ENCODE measurements at regions of chr17 and their contacts with region 1.

Region 1: DNA sequence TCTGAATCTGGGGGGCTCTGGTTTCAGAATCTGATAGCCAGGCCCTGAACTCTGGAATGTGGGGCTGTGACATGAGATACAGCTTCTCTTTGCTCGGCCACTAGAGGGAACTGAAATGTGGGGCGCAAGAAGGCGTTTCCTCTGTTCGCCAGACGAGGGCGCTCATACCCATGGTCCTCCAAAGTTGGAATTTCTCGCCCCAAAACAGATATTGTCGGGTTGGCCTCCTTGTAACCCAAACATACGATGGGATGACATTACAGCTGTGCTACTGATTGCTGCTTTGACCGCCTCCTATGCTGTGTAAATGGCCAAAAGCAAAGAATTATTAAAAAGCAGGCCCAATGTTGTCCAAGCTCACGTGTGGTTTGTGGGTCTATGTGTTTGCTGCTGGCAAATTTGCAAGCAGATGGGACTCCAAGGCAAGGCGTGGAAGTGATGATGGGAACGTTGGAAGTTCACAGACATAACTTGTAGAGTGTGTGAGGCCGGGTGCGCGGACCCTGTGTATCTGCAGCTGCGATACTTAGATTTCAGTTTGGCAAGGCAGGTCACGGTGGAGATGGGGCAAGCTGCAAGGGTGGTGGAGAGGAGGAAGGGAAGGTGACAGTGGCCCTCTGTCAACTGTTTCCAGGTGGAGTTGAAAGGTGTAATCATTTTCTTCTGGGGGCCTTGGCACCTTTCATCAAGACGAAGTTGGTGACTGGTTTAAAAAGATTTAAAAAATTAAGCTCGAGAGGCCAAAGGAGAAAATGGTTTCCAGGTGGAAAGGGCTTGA is 13.0 kb upstream of the MSI2 start:
- DNase-seq: peak; percentile 62 to 79 (median 75)
- ATAC-seq: peak; percentile 98
- H3K4me3 ChIP-seq: no peak overlapping the region
- H3K4me1 ChIP-seq: no peaks in the 10 kb centered on the region
- CTCF ChIP-seq: peak; percentile 97

Region 2: DNA sequence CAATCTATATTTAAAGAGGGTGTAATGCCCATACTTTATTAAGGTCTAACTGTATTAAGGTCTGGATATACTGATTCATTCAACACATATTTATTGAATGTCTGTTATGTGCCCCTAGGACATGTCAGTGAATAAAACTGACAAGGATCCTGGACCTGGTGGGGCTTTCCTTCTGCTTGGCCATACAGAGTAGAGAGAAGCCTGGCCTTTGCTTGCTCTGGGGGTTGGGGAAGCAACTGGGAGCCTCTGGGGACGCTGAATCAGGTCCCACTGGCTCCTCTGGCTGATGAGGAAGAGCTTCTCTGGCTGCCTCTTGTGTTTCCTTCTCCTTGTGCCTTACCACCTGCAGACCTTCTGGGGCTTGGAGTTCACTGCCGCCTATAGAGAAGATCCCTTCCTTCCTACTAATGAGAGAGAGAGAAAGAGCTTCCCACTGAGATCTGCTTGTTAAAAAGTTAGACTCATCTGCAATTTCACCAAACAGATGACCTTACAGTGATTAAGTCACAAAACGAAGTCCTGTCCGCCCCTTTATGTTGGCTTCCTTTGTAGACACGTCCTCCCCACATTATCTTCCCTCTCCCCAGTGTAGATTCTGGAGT is 62.6 kb after region 1 on chr17:
- intact Hi-C with region 1: no loop called
- DNase-seq: no peak
- ATAC-seq: no peak
- H3K4me3 ChIP-seq: no peak overlapping the region
- H3K4me1 ChIP-seq: no peaks in the 10 kb centered on the region
- CTCF ChIP-seq: no peak

Region 3: GRCh38 chr17:57350277-57350676 is 106.9 kb after region 1 on chr17:
- intact Hi-C with region 1: no loop called
- DNase-seq: peak in 1 of 3 donors; percentile 16
- ATAC-seq: peak; percentile 21
- H3K4me3 ChIP-seq: no peak overlapping the region
- H3K4me1 ChIP-seq: no peaks in the 10 kb centered on the region
- CTCF ChIP-seq: no peak

Region 4: DNA sequence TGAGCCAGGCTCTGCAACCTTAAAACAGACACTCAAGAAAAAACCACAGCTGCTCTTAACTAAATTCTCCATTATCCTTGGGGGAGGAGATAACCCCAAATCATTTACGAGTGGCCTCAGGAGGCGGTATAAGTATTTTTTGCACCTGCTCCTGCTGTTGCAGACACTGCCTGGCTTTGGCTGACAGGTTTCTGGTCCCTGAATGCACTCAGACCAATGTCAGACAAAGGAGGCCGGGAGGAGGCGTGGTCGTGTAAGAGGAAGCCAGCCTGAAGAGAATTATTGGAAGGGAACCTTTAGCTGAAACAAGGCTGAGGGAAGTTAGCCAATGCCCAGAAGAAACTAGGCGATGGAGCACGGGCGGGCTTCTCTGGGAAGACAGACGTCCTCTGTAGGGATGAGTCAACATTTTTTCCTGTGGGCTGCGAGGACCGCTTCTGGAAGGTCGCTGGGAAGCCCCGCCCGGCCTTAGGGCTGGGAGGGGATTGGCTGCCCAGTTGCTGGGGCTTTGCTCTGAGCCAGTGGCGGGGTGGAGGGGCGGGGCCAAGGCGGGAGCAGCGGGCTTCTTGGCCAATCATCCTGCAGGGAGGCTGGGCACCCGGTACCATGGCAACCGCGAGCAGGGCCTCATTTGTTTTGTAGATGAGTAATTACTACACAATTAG is 419.4 kb after region 1 on chr17:
- intact Hi-C with region 1: loop called in 1 of 2 experiments (anchors 10 kb)
- DNase-seq: peak; percentile 84 to 93 (median 87)
- ATAC-seq: peak; percentile 96
- H3K4me3 ChIP-seq: no peak overlapping the region
- H3K4me1 ChIP-seq: no peaks in the 10 kb centered on the region
- CTCF ChIP-seq: no peak

Region 5: GRCh38 chr17:57671667-57672632 is 428.6 kb after region 1 on chr17:
- intact Hi-C with region 1: loop called (anchors 10 kb)
- DNase-seq: peak; percentile 70 to 72 (median 71)
- ATAC-seq: peak; percentile 85
- H3K4me3 ChIP-seq: no peak overlapping the region
- H3K4me1 ChIP-seq: no peaks in the 10 kb centered on the region
- CTCF ChIP-seq: peak; percentile 80

Region 6: DNA sequence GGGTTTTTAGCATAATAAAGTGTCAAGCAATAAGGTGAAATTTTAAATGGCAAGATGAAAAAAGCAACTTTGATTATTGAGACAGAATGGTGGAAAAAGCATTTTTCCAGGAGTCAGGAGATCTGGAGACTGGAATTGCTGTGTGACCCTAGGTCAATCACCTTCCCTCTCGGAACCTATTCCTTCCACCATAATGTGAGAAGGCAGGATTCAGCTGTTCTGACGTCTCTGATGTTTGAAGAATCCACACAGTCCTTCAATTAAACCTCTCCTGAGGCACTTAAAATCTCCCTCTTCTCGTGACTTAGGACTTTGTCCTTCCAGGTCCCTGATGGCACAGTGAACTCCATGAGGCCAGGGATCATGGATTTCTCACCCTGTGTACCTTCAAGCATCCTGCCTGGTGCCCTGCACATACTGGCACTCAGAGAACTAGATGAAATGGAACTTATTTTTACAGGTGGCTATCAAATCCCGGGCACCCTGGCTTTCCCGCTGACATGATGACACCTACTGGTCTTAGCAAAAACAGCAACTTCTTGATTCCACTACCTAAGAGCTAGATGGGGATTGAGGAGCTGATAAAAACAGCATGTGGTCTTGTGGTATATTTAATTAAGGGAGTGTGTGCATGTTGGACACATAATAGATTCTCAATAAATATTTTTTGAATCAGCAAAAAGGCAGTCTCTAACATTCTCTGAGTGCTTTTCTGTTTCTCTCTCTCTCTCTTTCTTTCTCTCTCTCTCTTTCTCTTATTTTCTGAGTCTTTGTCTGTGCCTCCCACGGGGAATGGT is 504.1 kb after region 1 on chr17:
- intact Hi-C with region 1: loop called in 1 of 2 experiments (anchors 10 kb)
- DNase-seq: peak in 1 of 3 donors; percentile 53
- ATAC-seq: peak; percentile 67
- H3K4me3 ChIP-seq: no peak overlapping the region
- H3K4me1 ChIP-seq: no peaks in the 10 kb centered on the region
- CTCF ChIP-seq: peak; percentile 37

Region 7: GRCh38 chr17:57833179-57833939 is 590.0 kb after region 1 on chr17:
- intact Hi-C with region 1: loop called in 1 of 2 experiments (anchors 10 kb)
- DNase-seq: peak in 2 of 3 donors; percentile 44 to 84
- ATAC-seq: peak; percentile 76
- H3K4me3 ChIP-seq: no peak overlapping the region
- H3K4me1 ChIP-seq: no peaks in the 10 kb centered on the region
- CTCF ChIP-seq: peak; percentile 63

Measured in mucosa of descending colon (tissue), 3 donors.